ENCODE measurements at regions of chr2 and their contacts with region 1.

Region 1: GRCh38 chr2:121974897-121975661 is 219.6 kb downstream of the TSN start:
- DNase-seq: peak; percentile 86
- H3K4me3 ChIP-seq: peak overlapping the region; percentile 22
- H3K27ac ChIP-seq: no peak overlapping the region
- H3K4me1 ChIP-seq: no peaks in the 10 kb centered on the region
- CTCF ChIP-seq: peak; percentile 81

Region 2: GRCh38 chr2:121897335-121897970 is 77.6 kb before region 1 on chr2:
- CTCF ChIA-PET with region 1: interaction called, 4 read pairs
- POLR2A ChIA-PET with region 1: no interaction called
- intact Hi-C with region 1: loop called (anchors 5 kb)
- DNase-seq: peak; percentile 56
- H3K4me3 ChIP-seq: no peak overlapping the region
- H3K27ac ChIP-seq: no peak overlapping the region
- H3K4me1 ChIP-seq: no peaks in the 10 kb centered on the region
- CTCF ChIP-seq: peak; percentile 82

Region 3: GRCh38 chr2:122136056-122136455 is 161.0 kb after region 1 on chr2:
- CTCF ChIA-PET with region 1: no interaction called
- POLR2A ChIA-PET with region 1: no interaction called
- intact Hi-C with region 1: loop called (anchors 1 kb)
- DNase-seq: peak; percentile 57
- H3K4me3 ChIP-seq: no peak overlapping the region
- H3K27ac ChIP-seq: no peak overlapping the region
- H3K4me1 ChIP-seq: no peaks in the 10 kb centered on the region
- CTCF ChIP-seq: peak; percentile 74

Region 4: GRCh38 chr2:122300758-122301157 is 325.7 kb after region 1 on chr2:
- CTCF ChIA-PET with region 1: no interaction called
- POLR2A ChIA-PET with region 1: no interaction called
- intact Hi-C with region 1: loop called (anchors 2 kb)
- DNase-seq: peak; percentile 26
- H3K4me3 ChIP-seq: no peak overlapping the region
- H3K27ac ChIP-seq: no peak overlapping the region
- H3K4me1 ChIP-seq: no peaks in the 10 kb centered on the region
- CTCF ChIP-seq: peak; percentile 72

Region 5: DNA sequence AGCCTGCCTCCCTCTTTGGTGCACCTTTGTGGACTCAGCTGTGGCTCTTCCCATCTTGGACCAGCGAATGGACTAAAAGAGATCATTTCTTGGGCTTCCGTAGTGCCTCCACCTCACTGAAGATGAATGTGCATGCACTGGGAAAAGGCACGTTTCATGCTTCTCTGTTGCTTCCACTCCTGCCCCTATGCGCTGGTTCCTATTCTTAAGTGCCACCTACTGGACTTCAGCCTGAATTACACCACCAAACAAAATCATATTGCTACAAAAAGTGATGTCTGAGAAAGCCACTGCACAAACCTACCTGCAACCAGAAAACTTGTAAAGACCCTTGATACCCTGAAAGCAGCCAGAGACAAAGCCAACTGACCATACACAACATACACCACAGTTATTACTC is 476.0 kb after region 1 on chr2:
- CTCF ChIA-PET with region 1: no interaction called
- POLR2A ChIA-PET with region 1: no interaction called
- intact Hi-C with region 1: loop called (anchors 1 kb)
- DNase-seq: peak; percentile 46
- H3K4me3 ChIP-seq: no peak overlapping the region
- H3K27ac ChIP-seq: no peak overlapping the region
- H3K4me1 ChIP-seq: no peaks in the 10 kb centered on the region
- CTCF ChIP-seq: peak; percentile 82

Measured in OCI-LY7 (cell line).